ENCODE measurements at regions of chr3 and their contacts with region 1.

Region 1: GRCh38 chr3:186044973-186045372 is 63.9 kb downstream of the ETV5 start:
- DNase-seq: peak; percentile 92
- ATAC-seq: peak; percentile 87
- H3K4me3 ChIP-seq: peak overlapping the region in 1 of 3 experiments; percentile 29; a peak in 2 of 6 replicates
- H3K27ac ChIP-seq: peak overlapping the region; percentile 54
- H3K4me1 ChIP-seq: peaks cover 49% of the 10 kb centered on the region
- H3K27me3 ChIP-seq: no peaks in the 10 kb centered on the region
- CTCF ChIP-seq: peak; percentile 27; the same call in 1 of the 2 replicates
- EP300 ChIP-seq: peak in 1 of 2 experiments; percentile 51; a peak in 1 of 4 replicates
- POLR2A ChIP-seq: no peak
- RAD21 ChIP-seq: no peak

Region 2: GRCh38 chr3:186002884-186003472 is 42.0 kb before region 1 on chr3:
- CTCF ChIA-PET with region 1: no interaction called
- POLR2A ChIA-PET with region 1: no interaction called
- in situ Hi-C with region 1: no loop called
- intact Hi-C with region 1: loop called (anchors 2 kb)
- DNase-seq: peak; percentile 35
- ATAC-seq: peak; percentile 83
- H3K4me3 ChIP-seq: no peak overlapping the region
- H3K27ac ChIP-seq: no peak overlapping the region
- H3K4me1 ChIP-seq: no peaks in the 10 kb centered on the region
- H3K27me3 ChIP-seq: no peaks in the 10 kb centered on the region
- CTCF ChIP-seq: peak; percentile 68
- EP300 ChIP-seq: no peak
- POLR2A ChIP-seq: no peak
- RAD21 ChIP-seq: 0 out of 2 replicates have a peak, but pooled peaks have one; percentile 24

Region 3: DNA sequence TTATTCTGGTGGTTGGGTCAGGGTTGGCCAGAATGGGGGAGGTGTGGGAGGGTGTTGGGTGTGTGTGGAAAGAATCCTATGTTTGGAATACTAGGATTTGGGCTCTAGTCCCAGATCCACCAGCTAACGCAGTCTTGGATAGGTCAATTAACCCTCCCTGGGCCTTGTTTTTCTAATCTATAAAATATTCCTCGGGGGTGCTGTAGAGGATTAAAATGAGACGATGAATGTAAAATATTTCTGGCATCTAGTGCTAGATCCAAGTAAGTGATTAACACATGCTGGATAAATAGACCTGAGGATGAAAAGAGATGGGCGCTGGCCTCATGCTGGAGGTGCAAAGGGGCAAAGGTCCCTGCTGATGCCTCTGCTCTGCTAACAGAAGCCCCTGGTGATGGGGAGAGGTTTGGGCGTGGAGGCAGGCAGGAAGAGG is 131.6 kb after region 1 on chr3:
- CTCF ChIA-PET with region 1: no interaction called
- POLR2A ChIA-PET with region 1: no interaction called
- in situ Hi-C with region 1: no loop called
- intact Hi-C with region 1: no loop called
- DNase-seq: peak; percentile 47
- ATAC-seq: peak; percentile 87
- H3K4me3 ChIP-seq: no peak overlapping the region
- H3K27ac ChIP-seq: no peak overlapping the region
- H3K4me1 ChIP-seq: peaks cover 32% of the 10 kb centered on the region
- H3K27me3 ChIP-seq: no peaks in the 10 kb centered on the region
- CTCF ChIP-seq: no peak
- EP300 ChIP-seq: no peak
- POLR2A ChIP-seq: no peak
- RAD21 ChIP-seq: no peak

Measured in HepG2 (cell line).